GM13976 (cell line): ENCODE measurements at regions of chr5 and their contacts with region 1.

Region 1: GRCh38 chr5:114449860-114450421 is 88.1 kb downstream of the KCNN2 start:
- DNase-seq: peak; percentile 68
- CTCF ChIP-seq: peak; percentile 91

Region 2: DNA sequence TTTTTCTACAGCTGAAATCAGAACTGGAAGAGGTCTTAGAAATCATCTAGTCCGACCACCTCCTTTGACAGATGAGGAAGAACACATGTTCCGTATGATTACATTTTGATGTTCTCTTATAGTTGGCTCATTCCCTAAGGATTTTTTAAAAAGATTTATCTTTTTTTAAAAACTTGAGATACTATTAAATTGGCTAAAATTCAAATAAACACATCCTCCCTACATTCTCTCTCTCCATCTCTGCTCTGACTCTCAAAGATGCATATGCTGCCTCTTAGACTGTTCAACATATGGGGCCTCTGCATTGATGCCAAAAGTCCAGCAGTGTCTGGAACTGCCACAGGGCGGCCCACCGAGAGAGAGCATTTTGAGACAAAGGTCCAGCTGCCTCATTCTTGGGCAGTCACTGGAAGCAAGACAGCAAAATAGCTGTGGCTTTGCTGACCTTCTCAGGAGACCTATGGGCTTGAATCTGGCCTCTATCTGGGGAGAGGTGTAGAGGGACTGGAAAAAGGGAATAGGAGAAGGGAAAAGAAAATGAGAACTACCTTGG is 1002.4 kb before region 1 on chr5:
- in situ Hi-C with region 1: no loop called
- DNase-seq: no peak
- CTCF ChIP-seq: no peak

Region 3: DNA sequence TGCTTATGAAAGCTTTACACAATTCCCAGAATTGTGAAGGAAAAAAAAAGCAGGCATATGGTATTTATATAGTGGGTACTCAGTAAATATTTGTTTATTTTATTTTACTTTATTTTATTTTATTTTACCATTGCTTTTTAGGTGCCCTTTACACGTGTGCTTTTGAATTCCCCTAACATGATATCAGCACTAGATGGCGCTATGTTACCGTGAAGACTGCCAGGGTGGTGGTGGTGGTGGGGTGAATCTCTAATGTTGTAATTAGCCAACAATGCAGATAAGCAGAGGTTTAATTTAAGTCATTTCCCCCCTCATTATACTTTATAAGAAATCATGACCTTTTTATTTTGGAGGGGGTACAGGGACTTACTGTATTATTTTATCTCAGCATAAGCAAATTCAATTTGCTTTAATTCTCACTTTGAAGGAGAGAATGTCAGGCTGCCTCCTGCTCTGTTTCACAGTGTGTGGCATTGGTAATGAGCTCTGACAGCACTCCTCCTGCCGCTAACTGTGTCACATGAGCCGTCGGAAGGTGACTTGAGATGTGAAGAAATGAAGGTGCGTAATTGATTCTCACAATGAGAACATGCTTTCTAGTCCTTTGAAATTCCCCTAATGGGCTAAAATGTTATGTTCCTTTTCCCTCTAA is 770.9 kb before region 1 on chr5:
- in situ Hi-C with region 1: loop called (anchors 25 kb)
- DNase-seq: peak; percentile 21
- CTCF ChIP-seq: peak; percentile 65

Region 4: DNA sequence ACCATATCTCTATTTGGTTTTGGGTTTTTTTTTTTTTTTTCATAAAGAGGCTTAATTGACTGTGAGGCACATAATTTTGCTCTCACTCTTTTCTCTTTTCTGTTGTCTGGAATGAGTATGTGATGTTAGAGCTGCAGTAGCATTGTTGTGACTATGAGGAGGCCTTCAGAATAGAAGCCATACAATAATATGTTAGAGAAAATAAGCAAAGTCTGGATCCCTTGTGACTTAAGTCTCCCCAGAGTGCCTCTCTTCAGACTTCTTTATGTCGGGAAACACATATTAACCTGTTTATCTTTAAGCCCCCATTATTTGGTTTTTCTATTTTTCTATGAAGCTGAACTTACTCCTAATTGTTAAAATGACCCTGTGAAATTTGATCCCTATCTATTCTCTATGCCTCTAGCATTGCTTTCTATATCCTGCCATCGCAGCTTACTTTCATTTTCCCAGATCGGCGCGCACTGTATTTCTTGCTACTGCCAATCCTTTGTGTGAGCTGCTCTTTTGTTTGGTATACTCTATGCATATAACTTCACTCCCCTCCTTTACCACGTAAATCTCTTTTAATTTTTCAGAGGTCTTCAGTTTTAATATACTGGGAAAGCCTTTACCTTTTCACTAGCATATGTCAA is 460.5 kb before region 1 on chr5:
- in situ Hi-C with region 1: no loop called
- DNase-seq: no peak
- CTCF ChIP-seq: no peak

Region 5: DNA sequence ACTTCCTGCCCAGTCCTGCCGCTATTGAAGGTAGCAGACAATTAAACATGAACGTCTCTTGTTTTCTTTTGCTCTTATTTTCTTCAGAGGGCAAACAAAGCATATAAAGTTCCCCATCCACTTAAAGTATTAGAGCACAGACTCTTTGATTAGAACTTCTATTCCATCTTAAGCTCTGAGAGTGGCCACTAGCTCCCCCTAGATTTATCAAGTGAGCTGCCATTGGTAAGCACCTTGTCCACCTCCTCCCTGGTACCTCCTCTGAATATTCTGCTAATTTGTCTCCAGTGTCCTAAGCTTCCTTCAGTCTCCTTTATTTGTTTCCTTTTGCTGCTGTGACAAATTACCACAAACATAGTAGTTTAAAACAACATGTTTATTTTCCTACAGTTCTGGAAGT is 352.4 kb before region 1 on chr5:
- in situ Hi-C with region 1: loop called (anchors 25 kb)
- DNase-seq: no peak
- CTCF ChIP-seq: no peak

Region 6: GRCh38 chr5:114544561-114544960 is 94.6 kb after region 1 on chr5:
- in situ Hi-C with region 1: no loop called
- DNase-seq: no peak
- CTCF ChIP-seq: no peak